Heart right ventricle (tissue), 16 donors: ENCODE measurements at regions of chr10 and their contacts with region 1.

Region 1: GRCh38 chr10:133139551-133140065 is 20.4 kb upstream of the KNDC1 start:
- DNase-seq: no peak
- ATAC-seq: no peak
- H3K4me3 ChIP-seq: no peak overlapping the region
- H3K27ac ChIP-seq: no peak overlapping the region
- H3K4me1 ChIP-seq: peaks cover 0 to 6% (median 0%) of the 10 kb centered on the region in 9 donors
- H3K27me3 ChIP-seq: peaks cover 16 to 49% (median 39%) of the 10 kb centered on the region in 7 donors
- CTCF ChIP-seq: no peak

Region 2: GRCh38 chr10:132987671-132988571 is 151.7 kb before region 1 on chr10:
- intact Hi-C with region 1: no loop called
- DNase-seq: no peak
- ATAC-seq: peak in 2 of 8 donors; percentile 42 to 66
- H3K4me3 ChIP-seq: no peak overlapping the region
- H3K27ac ChIP-seq: no peak overlapping the region
- H3K4me1 ChIP-seq: peaks cover 0 to 6% (median 0%) of the 10 kb centered on the region in 9 donors
- H3K27me3 ChIP-seq: peaks cover 0 to 46% (median 19%) of the 10 kb centered on the region in 7 donors
- CTCF ChIP-seq: no peak

Region 3: DNA sequence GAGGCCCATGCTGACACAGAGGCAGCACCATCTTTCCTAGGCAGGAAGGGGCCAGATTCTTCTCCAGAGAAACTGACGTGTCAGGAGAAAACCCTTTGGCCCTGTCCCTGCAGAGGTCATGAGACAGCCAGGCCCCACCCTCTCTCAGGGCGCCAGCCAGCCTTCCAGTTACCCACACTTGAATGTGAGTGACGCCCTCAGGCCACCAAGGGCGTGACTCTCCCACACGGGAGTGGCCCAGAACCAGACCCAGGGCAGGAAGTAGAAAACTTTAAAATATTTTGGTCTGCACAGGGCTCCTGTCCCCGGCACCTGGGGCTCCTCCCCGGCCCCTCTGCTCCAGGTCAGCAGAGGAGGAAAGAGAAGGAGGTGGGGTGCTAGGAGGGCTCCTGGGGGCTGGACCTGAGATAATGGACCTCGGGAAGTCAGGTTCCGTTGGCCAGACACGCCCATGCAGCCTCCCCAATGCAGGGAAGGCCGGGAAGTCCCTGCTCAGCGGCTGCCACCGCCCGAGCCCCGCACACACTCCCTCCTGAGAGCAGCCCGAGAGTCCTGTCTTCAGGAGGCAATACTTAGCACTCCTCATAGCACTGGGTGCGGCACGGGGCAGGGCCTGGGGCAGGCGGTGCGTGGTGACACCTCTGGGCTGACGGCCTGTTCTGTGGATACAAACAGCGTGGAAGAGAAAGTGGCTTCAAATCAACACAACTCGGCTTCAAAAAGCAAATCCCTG is 130.2 kb before region 1 on chr10:
- intact Hi-C with region 1: no loop called
- DNase-seq: peak; percentile 69 to 72
- ATAC-seq: peak; percentile 77 to 91 (median 86)
- H3K4me3 ChIP-seq: peak overlapping the region in 1 of 10 donors; percentile 36
- H3K27ac ChIP-seq: peak overlapping the region in 5 of 10 donors; percentile 5 to 85 (median 51)
- H3K4me1 ChIP-seq: peaks cover 0 to 32% (median 8%) of the 10 kb centered on the region in 9 donors
- H3K27me3 ChIP-seq: peaks cover 0 to 25% (median 3%) of the 10 kb centered on the region in 7 donors
- CTCF ChIP-seq: no peak

Region 4: DNA sequence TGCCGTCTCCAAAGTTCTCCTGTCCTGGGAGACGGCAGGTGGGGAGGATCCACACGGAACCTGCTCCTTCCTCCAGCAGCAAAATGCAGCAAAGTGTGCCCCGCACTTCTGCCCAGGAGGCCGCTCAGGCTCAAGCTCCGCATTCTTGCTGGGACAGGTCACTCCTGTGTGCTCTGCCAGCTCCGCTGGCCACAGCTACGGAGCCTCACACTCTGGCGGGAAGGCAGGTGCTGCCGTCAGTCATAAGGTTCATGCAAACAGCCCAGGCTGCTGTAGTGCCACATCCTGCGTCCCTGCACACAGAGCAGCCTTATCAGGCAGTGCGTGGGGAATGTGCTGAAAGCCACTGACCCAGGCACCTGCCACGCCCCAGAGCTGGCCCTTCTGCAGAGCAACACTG is 29.5 kb before region 1 on chr10:
- intact Hi-C with region 1: no loop called
- DNase-seq: peak in 1 of 2 donors; percentile 13
- ATAC-seq: peak; percentile 44 to 95 (median 75)
- H3K4me3 ChIP-seq: no peak overlapping the region
- H3K27ac ChIP-seq: peak overlapping the region in 1 of 10 donors; percentile 50
- H3K4me1 ChIP-seq: peaks cover 0 to 15% (median 0%) of the 10 kb centered on the region in 9 donors
- H3K27me3 ChIP-seq: peaks cover 0 to 8% (median 0%) of the 10 kb centered on the region in 7 donors
- CTCF ChIP-seq: no peak

Region 5: GRCh38 chr10:133318494-133319127 is 179.0 kb after region 1 on chr10:
- intact Hi-C with region 1: loop called in 1 of 10 experiments (anchors 10 kb)
- DNase-seq: peak in 1 of 2 donors; percentile 63
- ATAC-seq: peak; percentile 84 to 92 (median 86)
- H3K4me3 ChIP-seq: peak overlapping the region in 8 of 10 donors; percentile 8 to 47 (median 38)
- H3K27ac ChIP-seq: no peak overlapping the region
- H3K4me1 ChIP-seq: peaks cover 0 to 10% (median 6%) of the 10 kb centered on the region in 9 donors
- H3K27me3 ChIP-seq: peaks cover 0 to 25% (median 15%) of the 10 kb centered on the region in 7 donors
- CTCF ChIP-seq: peak; percentile 18 to 85 (median 66)